Posterior vena cava (tissue), 2 donors: ENCODE measurements at regions of chr1 and their contacts with region 1.

Region 1: GRCh38 chr1:116807394-116808199 is 53.4 kb downstream of the CD2 start:
- DNase-seq: no peak

Region 2: GRCh38 chr1:116724765-116725375 is 82.7 kb before region 1 on chr1:
- intact Hi-C with region 1: no loop called
- DNase-seq: no peak

Region 3: GRCh38 chr1:116737020-116737854 is 70.4 kb before region 1 on chr1:
- intact Hi-C with region 1: loop called in 1 of 2 experiments (anchors 1 kb)
- DNase-seq: no peak

Region 4: GRCh38 chr1:116833718-116834117 is 26.1 kb after region 1 on chr1:
- intact Hi-C with region 1: no loop called
- DNase-seq: no peak

Region 5: GRCh38 chr1:117586747-117587498 is 779.3 kb after region 1 on chr1:
- intact Hi-C with region 1: loop called in 1 of 2 experiments (anchors 5 kb)
- DNase-seq: peak; percentile 74